ENCODE measurements at regions of chr12 and their contacts with region 1.

Region 1: GRCh38 chr12:96285158-96285557 is 91.0 kb downstream of the ELK3 start:
- DNase-seq: no peak
- ATAC-seq: no peak
- H3K4me3 ChIP-seq: no peak overlapping the region
- H3K4me3 Mint-ChIP-seq: no peak overlapping the region
- H3K27ac ChIP-seq: no peak overlapping the region
- H3K27ac Mint-ChIP-seq: peak overlapping the region; percentile 12 to 48
- H3K4me1 ChIP-seq: peaks cover 0 to 6% of the 10 kb centered on the region in 2 experiments
- H3K4me1 Mint-ChIP-seq: peaks cover 14 to 21% (median 17%) of the 10 kb centered on the region in 3 donors
- H3K27me3 ChIP-seq: no peaks in the 10 kb centered on the region
- H3K27me3 Mint-ChIP-seq: no peaks in the 10 kb centered on the region

Region 2: GRCh38 chr12:96383991-96384390 is 98.8 kb after region 1 on chr12:
- CTCF ChIA-PET with region 1: no interaction called
- POLR2A ChIA-PET with region 1: interaction called in 1 of 2 experiments, 11 read pairs
- DNase-seq: no peak
- ATAC-seq: no peak
- H3K4me3 ChIP-seq: no peak overlapping the region
- H3K4me3 Mint-ChIP-seq: peak overlapping the region in 2 of 3 donors; percentile 3 to 4
- H3K27ac ChIP-seq: no peak overlapping the region
- H3K27ac Mint-ChIP-seq: peak overlapping the region; percentile 16 to 76
- H3K4me1 ChIP-seq: peaks cover 2 to 34% of the 10 kb centered on the region in 2 experiments
- H3K4me1 Mint-ChIP-seq: peaks cover 81 to 86% (median 83%) of the 10 kb centered on the region in 3 donors
- H3K27me3 ChIP-seq: no peaks in the 10 kb centered on the region
- H3K27me3 Mint-ChIP-seq: no peaks in the 10 kb centered on the region

Measured in T-cell (primary cell).